MCF 10A (cell line): ENCODE measurements at regions of chr1 and their contacts with region 1.

Region 1: GRCh38 chr1:167220537-167221125 is at the start of gene POU2F1:
- DNase-seq: peak; percentile 100
- H3K4me3 Mint-ChIP-seq: peak within 1 kb of the TSS; percentile 100
- H3K27ac Mint-ChIP-seq: peak within 1 kb of the TSS; percentile 100
- H3K4me1 Mint-ChIP-seq: peaks cover 34% of the 10 kb centered on the region
- H3K27me3 Mint-ChIP-seq: no peaks in the 10 kb centered on the region
- CTCF ChIP-seq: peak; percentile 60
- total RNA-seq, gene POU2F1: 11.6 and 16.7 TPM in 2 replicates

Region 2: DNA sequence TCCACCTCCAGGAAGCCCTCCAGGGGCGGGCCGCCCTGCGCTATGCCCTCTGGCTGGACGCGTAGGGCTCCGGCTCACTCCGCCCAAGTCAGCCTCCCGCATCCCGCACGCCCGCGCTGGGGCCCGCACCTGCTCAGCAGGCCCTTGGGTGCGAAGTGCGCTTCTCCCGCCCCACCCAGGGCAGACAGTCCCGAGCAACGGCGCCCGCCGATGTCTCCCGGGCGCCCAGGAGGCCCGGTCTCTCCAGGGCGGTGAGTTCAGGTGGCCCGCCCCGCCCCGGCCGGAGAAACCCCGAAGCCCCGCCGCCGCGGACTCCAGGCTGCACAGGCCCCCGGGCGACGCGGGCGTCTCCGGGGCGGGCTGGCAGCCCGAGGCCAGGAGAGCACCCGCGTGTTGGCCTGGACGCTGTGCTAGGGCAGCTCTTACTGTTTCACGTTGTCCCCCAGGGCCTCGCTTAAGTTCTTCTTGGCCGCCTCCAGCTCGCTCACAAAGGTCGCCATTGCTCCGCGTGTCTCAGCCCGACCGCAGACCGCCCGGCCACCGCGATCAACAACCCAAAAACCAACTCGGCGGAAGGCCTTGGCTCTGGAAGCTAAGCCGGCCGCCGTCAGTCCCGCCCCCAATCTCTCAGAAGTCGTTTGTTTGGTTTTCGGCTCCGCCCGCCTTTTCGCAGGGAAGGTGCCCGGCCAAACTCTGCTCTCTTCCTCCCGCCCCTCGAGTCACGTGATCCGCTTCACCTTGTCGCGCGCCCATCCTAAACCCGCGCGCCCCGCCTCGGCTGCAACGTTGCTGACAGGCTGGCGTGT is 344.7 kb before region 1 on chr1 and contains the start of gene TADA1:
- CTCF ChIA-PET with region 1: interaction called, 3 read pairs
- POLR2A ChIA-PET with region 1: interaction called, 15 read pairs
- intact Hi-C with region 1: no loop called
- DNase-seq: peak; percentile 100
- H3K4me3 Mint-ChIP-seq: peak within 1 kb of the TSS; percentile 92
- H3K27ac Mint-ChIP-seq: peak within 1 kb of the TSS; percentile 95
- H3K4me1 Mint-ChIP-seq: peaks cover 38% of the 10 kb centered on the region
- H3K27me3 Mint-ChIP-seq: no peaks in the 10 kb centered on the region
- CTCF ChIP-seq: no peak
- total RNA-seq, gene TADA1: 14.7 and 15.9 TPM in 2 replicates

Region 3: DNA sequence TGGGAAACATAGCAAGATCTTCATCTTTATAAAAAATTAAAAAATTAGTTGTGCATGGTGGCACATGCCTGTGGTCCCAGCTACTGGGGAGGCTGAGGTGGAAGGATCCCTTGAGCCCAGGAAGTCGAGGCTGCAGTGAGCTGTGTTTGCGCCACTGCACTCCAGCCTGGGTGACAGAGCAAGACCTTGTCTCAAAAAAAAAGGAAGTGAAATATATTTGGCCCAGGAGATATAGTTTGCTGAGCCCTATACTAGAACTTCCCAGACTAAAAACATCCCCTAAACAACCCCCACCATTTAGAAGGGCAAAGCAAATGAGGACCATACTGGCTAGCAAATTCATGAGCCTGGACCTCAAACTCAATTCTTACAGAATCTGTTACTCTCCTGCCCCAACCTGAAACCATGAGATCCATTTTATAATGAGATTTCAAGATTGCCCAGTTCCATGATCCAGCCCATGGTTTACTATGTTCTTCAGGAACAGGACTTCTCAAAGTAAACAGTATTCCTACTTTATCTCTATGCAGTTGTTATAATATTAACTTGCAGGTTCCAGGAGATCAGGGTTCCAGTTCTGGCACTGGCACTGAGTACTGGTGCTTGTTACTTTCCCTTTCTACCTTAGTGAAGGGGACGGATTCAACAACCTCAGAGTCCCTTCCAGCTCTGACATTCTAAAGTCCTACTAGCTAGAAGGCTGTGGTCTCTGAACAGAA is 295.6 kb before region 1 on chr1:
- CTCF ChIA-PET with region 1: no interaction called
- POLR2A ChIA-PET with region 1: no interaction called
- intact Hi-C with region 1: no loop called
- DNase-seq: no peak
- H3K4me3 Mint-ChIP-seq: no peak overlapping the region
- H3K27ac Mint-ChIP-seq: no peak overlapping the region
- H3K4me1 Mint-ChIP-seq: peaks cover 6% of the 10 kb centered on the region
- H3K27me3 Mint-ChIP-seq: peaks cover 10% of the 10 kb centered on the region
- CTCF ChIP-seq: no peak

Region 4: GRCh38 chr1:167082511-167083027 is 138.1 kb before region 1 on chr1:
- CTCF ChIA-PET with region 1: interaction called, 10 read pairs
- POLR2A ChIA-PET with region 1: interaction called, 8 read pairs
- intact Hi-C with region 1: no loop called
- DNase-seq: peak; percentile 38
- H3K4me3 Mint-ChIP-seq: no peak overlapping the region
- H3K27ac Mint-ChIP-seq: no peak overlapping the region
- H3K4me1 Mint-ChIP-seq: no peaks in the 10 kb centered on the region
- H3K27me3 Mint-ChIP-seq: peaks cover 35% of the 10 kb centered on the region
- CTCF ChIP-seq: no peak

Region 5: DNA sequence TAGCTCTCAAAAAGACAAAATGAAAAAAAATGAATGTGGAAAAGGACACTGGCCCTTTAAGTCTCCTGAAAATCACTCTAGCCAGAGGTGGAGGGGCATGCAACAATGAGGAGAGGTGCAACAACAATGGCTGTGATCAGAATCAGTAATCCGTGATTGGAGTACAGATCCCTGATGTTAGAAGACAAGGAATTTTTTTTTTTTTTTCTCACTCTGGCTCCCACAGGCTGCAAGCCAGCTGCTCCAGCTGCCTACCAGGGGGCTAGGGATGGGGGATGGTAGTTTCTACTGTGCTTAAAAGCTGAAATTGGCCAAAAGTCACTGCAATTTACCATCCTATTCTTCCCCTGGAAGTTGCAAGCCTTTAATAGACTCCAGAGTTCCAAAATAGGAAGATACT is 72.2 kb before region 1 on chr1:
- CTCF ChIA-PET with region 1: interaction called, 14 read pairs
- POLR2A ChIA-PET with region 1: interaction called, 7 read pairs
- intact Hi-C with region 1: no loop called
- DNase-seq: no peak
- H3K4me3 Mint-ChIP-seq: no peak overlapping the region
- H3K27ac Mint-ChIP-seq: no peak overlapping the region
- H3K4me1 Mint-ChIP-seq: peaks cover 11% of the 10 kb centered on the region
- H3K27me3 Mint-ChIP-seq: no peaks in the 10 kb centered on the region
- CTCF ChIP-seq: no peak

Region 6: GRCh38 chr1:167330601-167331293 is 110.1 kb after region 1 on chr1:
- CTCF ChIA-PET with region 1: interaction called, 17 read pairs
- POLR2A ChIA-PET with region 1: no interaction called
- intact Hi-C with region 1: no loop called
- DNase-seq: no peak
- H3K4me3 Mint-ChIP-seq: no peak overlapping the region
- H3K27ac Mint-ChIP-seq: no peak overlapping the region
- H3K4me1 Mint-ChIP-seq: peaks cover 12% of the 10 kb centered on the region
- H3K27me3 Mint-ChIP-seq: no peaks in the 10 kb centered on the region
- CTCF ChIP-seq: no peak

Region 7: DNA sequence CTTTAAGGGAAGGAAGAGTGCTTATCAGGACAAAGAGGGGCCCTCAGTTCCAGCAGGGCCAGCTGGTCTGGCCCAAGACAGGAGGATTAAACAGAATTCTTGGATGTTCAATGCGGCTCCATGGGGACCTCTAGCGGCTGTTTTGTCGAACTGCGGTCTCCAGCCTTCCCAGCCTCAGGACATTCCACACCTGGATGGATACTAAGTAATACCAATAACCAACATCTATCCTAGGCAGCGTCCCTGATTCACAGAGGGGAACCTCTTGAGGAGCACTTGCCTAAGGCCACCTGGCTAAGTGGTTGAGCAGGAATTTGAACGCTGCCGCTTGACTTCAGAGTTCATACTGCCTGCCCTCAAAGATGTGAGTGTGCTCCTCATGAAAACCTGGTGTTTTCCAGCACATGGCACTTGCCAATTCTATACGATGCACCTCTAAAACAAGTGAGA is 313.2 kb after region 1 on chr1:
- CTCF ChIA-PET with region 1: interaction called, 5 read pairs
- POLR2A ChIA-PET with region 1: interaction called, 5 read pairs
- intact Hi-C with region 1: loop called (anchors 2 kb)
- DNase-seq: peak; percentile 90
- H3K4me3 Mint-ChIP-seq: no peak overlapping the region
- H3K27ac Mint-ChIP-seq: no peak overlapping the region
- H3K4me1 Mint-ChIP-seq: peaks cover 5% of the 10 kb centered on the region
- H3K27me3 Mint-ChIP-seq: no peaks in the 10 kb centered on the region
- CTCF ChIP-seq: peak; percentile 97